ENCODE measurements at regions of chr19 and their contacts with region 1.

Region 1: DNA sequence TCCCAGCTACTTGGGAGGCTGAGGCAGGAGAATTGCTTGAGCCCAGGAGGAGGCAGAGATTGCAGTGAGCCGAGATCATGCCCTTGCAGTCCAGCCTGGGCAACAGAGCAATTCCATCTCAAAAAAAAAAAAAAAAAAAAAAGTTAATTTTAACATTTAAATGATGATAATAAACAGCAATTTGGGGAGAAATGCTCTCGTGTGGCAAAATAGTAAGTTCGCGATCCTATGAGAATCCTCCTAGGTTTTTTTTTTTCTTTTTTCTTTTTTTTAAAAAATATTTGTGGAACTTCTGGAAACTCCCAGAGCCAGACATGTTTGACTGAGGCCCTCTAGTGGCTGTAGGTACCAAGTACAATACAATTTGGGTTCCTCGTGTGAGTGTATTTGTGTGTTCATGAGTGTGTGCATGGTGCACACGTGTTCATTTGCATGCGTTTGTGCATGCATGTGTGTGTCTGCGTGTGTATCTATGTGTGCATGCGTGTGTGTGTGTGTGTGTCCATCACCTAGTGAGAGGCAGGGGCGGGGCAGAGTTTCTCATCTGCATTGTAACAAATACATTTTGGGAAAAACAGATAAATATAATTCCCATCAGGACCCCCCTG is 31.2 kb downstream of the TMPRSS9 start:
- DNase-seq: peak; percentile 82
- H3K4me3 ChIP-seq: no peak overlapping the region
- H3K27ac ChIP-seq: no peak overlapping the region
- H3K4me1 ChIP-seq: no peaks in the 10 kb centered on the region
- H3K27me3 ChIP-seq: no peaks in the 10 kb centered on the region
- CTCF ChIP-seq: peak; percentile 87

Region 2: DNA sequence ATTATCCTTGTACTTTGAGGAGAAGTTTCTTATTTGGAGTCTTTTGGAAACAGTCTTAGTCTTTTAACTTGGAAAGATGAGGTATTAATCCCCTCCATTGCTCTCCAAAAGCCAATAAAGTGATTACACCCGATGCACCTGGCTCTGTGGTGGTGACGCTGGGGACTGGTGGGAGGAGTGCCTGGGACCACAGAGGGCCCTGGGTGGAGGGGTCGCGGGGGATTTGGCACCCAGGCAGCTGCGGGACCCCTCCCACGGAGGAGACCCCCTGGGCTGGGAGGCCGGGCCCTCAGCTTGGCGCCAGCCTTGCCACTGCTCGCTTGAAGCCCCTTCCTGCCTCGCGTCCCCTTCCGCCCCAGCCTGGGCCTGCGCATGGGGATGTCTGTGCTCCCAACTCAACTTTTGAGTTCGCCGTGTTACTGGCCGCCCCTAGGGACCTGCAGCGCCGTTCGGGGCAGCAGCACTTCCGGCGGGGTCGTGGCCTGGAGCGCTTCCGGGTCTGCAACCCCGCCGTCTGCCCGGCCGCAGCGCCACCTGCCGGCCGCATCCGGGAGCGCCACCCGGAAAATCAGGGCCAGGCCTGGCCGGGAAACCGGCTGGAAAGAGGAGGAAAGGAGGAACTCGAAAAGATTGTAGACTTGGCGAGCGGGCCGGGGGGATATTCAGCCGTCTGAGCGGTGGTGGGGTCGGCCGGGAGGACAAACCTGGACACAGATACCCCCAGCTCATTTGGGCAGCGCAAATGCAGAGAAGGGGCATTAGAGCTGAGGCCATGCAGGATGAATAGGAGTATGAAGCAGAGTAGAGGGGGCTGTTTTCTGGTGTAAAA is 117.7 kb before region 1 on chr19:
- CTCF ChIA-PET with region 1: interaction called, 5 read pairs
- POLR2A ChIA-PET with region 1: no interaction called
- intact Hi-C with region 1: loop called (anchors 1 kb)
- DNase-seq: peak; percentile 93
- H3K4me3 ChIP-seq: peak overlapping the region; percentile 100
- H3K27ac ChIP-seq: peak overlapping the region; percentile 47
- H3K4me1 ChIP-seq: peaks cover 21% of the 10 kb centered on the region
- H3K27me3 ChIP-seq: no peaks in the 10 kb centered on the region
- CTCF ChIP-seq: peak; percentile 98

Region 3: GRCh38 chr19:2524838-2525723 is 133.9 kb after region 1 on chr19:
- CTCF ChIA-PET with region 1: no interaction called
- POLR2A ChIA-PET with region 1: no interaction called
- intact Hi-C with region 1: no loop called
- DNase-seq: peak; percentile 77
- H3K4me3 ChIP-seq: peak overlapping the region; percentile 40
- H3K27ac ChIP-seq: peak overlapping the region; percentile 67
- H3K4me1 ChIP-seq: peaks cover 8% of the 10 kb centered on the region
- H3K27me3 ChIP-seq: no peaks in the 10 kb centered on the region
- CTCF ChIP-seq: no peak